ENCODE measurements at regions of chr10 and their contacts with region 1.

Region 1: GRCh38 chr10:104308439-104308903 is 29.8 kb downstream of the ITPRIP start:
- DNase-seq: no peak
- H3K4me3 Mint-ChIP-seq: peak overlapping the region; percentile 6
- H3K27ac Mint-ChIP-seq: peak overlapping the region; percentile 67
- H3K4me1 Mint-ChIP-seq: peaks cover 38% of the 10 kb centered on the region
- H3K27me3 Mint-ChIP-seq: no peaks in the 10 kb centered on the region

Region 2: DNA sequence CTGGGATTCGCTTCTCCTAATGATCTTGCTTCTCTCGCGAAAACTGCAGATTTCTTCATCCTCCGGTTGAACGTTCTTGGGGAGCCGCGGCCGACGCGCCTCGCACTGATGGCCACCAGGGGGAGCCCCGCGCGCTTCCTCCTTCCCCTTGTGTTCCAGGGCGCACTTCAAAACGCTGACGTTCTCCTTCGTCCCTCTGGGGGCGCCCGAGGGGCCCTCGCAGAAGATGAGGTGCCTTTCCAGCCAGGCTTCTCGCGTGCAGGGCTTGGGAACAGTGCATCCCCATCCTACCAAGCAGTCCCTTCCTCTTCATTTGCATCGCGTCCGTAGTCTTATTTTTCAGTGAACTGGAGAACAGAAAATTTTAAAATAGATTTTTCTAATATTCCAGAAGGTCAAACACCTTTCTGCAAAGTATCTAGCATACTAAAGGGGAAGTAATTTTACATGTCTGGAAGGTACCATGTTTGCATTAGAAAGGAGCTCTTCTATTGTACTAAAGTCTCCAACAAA is 17.0 kb before region 1 on chr10:
- intact Hi-C with region 1: loop called (anchors 1 kb)
- DNase-seq: peak; percentile 80
- H3K4me3 Mint-ChIP-seq: no peak overlapping the region
- H3K27ac Mint-ChIP-seq: no peak overlapping the region
- H3K4me1 Mint-ChIP-seq: peaks cover 13% of the 10 kb centered on the region
- H3K27me3 Mint-ChIP-seq: peaks cover 38% of the 10 kb centered on the region

Region 3: GRCh38 chr10:104328896-104329710 is 20.6 kb after region 1 on chr10:
- intact Hi-C with region 1: loop called (anchors 1 kb)
- DNase-seq: peak; percentile 44
- H3K4me3 Mint-ChIP-seq: peak overlapping the region; percentile 68
- H3K27ac Mint-ChIP-seq: peak overlapping the region; percentile 90
- H3K4me1 Mint-ChIP-seq: peaks cover 91% of the 10 kb centered on the region
- H3K27me3 Mint-ChIP-seq: no peaks in the 10 kb centered on the region

Region 4: GRCh38 chr10:104337974-104338735 is 29.7 kb after region 1 on chr10 and contains the start of gene ITPRIP:
- intact Hi-C with region 1: loop called (anchors 1 kb)
- DNase-seq: peak; percentile 74
- H3K4me3 Mint-ChIP-seq: peak within 1 kb of the TSS; percentile 97
- H3K27ac Mint-ChIP-seq: peak within 1 kb of the TSS; percentile 99
- H3K4me1 Mint-ChIP-seq: peaks cover 46% of the 10 kb centered on the region
- H3K27me3 Mint-ChIP-seq: peaks cover 1% of the 10 kb centered on the region
- total RNA-seq, gene ITPRIP: 17.1 and 18.8 TPM in 2 replicates